Activated T-helper 2 cell treated with anti-CD3 and anti-CD28 coated beads, Interferon-gamma antibody, Interleukin-2, Interleukin-4, amounts not matched to agents 10 μg/mL and 5 μg/mL and 100 μg/mL, durations not matched to agents 14 hours and 24 hours and 36 hours (primary cell): ENCODE measurements at regions of chr9 and their contacts with region 1.

Region 1: GRCh38 chr9:134738869-134739659 is 97.5 kb downstream of the COL5A1 start:
- DNase-seq: peak; percentile 14
- H3K4me3 Mint-ChIP-seq: no peak overlapping the region
- H3K27ac Mint-ChIP-seq: no peak overlapping the region
- H3K4me1 Mint-ChIP-seq: no peaks in the 10 kb centered on the region
- H3K27me3 Mint-ChIP-seq: no peaks in the 10 kb centered on the region

Region 2: DNA sequence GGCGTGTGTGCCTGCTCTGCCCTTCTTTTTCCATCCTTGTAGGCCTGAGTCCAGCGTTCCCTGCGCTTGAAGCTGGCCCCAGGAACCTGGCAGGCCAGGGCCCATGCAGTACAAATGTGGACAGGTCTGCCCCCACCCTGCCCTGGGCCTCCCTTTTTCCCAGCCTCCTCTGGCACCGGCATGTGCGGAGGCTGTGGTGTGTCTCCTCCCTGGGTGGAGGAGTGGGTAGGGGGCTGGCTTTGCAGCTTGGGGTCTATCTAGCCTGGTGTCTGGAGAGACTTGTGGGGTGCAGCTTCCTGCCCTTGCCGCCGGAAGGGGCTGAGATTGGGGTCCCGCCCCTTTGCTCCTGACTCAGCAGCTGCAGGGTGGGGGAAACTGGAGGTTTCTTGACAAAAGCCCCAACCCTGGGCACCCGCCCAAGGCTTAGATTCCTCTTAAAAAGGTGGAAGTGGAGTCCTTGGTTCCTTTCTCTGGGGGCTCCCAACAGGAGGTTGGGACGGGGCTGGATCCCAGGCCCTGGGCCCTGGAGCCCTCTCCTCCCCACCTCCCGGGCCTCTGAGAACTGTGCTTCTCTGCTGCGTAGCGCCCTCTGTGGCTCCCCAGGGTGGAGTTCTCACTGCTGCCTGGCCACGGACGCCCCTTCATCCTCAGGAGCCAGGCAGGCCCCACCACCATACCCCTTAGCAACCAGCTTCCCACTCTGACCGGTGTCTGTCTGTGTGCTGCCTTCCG is 394.8 kb before region 1 on chr9:
- intact Hi-C with region 1: no loop called
- DNase-seq: no peak
- H3K4me3 Mint-ChIP-seq: no peak overlapping the region
- H3K27ac Mint-ChIP-seq: no peak overlapping the region
- H3K4me1 Mint-ChIP-seq: no peaks in the 10 kb centered on the region
- H3K27me3 Mint-ChIP-seq: no peaks in the 10 kb centered on the region

Region 3: GRCh38 chr9:134698587-134699342 is 40.3 kb before region 1 on chr9:
- intact Hi-C with region 1: loop called (anchors 1 kb)
- DNase-seq: peak; percentile 47
- H3K4me3 Mint-ChIP-seq: no peak overlapping the region
- H3K27ac Mint-ChIP-seq: no peak overlapping the region
- H3K4me1 Mint-ChIP-seq: no peaks in the 10 kb centered on the region
- H3K27me3 Mint-ChIP-seq: no peaks in the 10 kb centered on the region